HepG2 (cell line): ENCODE measurements at regions of chr5 and their contacts with region 1.

Region 1: DNA sequence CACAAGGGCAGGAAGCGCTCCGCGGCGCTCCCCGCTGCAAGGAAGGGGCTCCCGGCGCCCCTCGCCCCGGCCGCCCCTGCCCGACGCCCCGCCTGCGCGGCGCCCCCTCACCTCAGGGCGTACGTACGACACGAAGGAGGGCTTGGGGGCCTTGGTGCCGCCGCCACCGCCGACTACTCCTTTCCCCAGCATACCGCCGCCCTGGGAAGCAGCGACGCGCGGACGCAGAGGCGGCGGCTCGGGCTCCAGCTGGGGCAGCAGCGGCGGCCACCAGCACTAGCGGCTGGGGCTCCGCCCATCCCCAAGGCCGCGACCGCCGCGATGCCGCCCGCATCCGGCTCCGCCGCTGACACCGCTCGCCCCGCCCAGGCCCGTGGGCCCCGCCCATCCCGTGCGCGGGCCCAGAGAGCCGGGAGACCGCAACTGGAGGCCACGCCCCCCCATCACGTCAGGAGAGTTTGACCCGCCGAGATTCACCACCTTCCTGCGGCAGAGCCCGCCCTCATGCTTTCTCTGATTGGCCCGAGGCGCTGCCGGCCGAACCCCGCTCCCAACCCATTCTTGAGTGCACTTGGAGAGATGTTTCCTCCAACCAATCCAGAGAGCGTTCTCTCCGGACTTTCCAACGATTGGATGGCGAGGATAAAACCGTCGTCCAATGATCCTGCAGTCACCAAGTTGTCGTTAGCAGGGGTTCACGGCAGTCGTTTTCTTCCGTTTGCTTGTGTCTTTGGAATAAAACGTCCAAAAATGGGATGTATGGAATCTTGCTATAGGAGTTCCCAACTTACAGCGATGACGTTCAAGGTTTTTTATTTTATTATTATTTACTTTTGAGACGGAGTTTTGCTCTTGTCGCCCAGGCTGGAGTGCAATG is at the start of gene MTMR12:
- DNase-seq: peak; percentile 98
- ATAC-seq: peak; percentile 94
- H3K4me3 ChIP-seq: peak within 1 kb of the TSS; percentile 84 to 95 (median 92)
- H3K27ac ChIP-seq: peak within 1 kb of the TSS; percentile 95
- H3K4me1 ChIP-seq: peaks cover 73% of the 10 kb centered on the region
- H3K27me3 ChIP-seq: no peaks in the 10 kb centered on the region
- CTCF ChIP-seq: no peak
- EP300 ChIP-seq: peak in 1 of 2 experiments; percentile 9; a peak in 1 of 4 replicates
- POLR2A ChIP-seq: peak; percentile 77 to 78
- RAD21 ChIP-seq: peak; percentile 64
- total RNA-seq, gene MTMR12: 36.6 and 56.5 TPM in 2 replicates

Region 2: GRCh38 chr5:32174011-32174870 is 138.6 kb before region 1 on chr5 and contains the start of gene GOLPH3:
- CTCF ChIA-PET with region 1: no interaction called
- POLR2A ChIA-PET with region 1: no interaction called
- in situ Hi-C with region 1: no loop called
- intact Hi-C with region 1: loop called (anchors 5 kb)
- DNase-seq: peak; percentile 81
- ATAC-seq: peak; percentile 94
- H3K4me3 ChIP-seq: peak within 1 kb of the TSS; percentile 85 to 90 (median 87)
- H3K27ac ChIP-seq: peak within 1 kb of the TSS; percentile 99
- H3K4me1 ChIP-seq: peaks cover 39% of the 10 kb centered on the region
- H3K27me3 ChIP-seq: no peaks in the 10 kb centered on the region; a peak in 1 of 5 replicates
- CTCF ChIP-seq: no peak; the same call in none of the 2 replicates
- EP300 ChIP-seq: no peak; a peak in 1 of 4 replicates
- POLR2A ChIP-seq: peak; percentile 86 to 90
- RAD21 ChIP-seq: peak; percentile 36; the same call in 1 of the 2 replicates
- total RNA-seq, gene GOLPH3: 84.5 and 102 TPM in 2 replicates

Region 3: DNA sequence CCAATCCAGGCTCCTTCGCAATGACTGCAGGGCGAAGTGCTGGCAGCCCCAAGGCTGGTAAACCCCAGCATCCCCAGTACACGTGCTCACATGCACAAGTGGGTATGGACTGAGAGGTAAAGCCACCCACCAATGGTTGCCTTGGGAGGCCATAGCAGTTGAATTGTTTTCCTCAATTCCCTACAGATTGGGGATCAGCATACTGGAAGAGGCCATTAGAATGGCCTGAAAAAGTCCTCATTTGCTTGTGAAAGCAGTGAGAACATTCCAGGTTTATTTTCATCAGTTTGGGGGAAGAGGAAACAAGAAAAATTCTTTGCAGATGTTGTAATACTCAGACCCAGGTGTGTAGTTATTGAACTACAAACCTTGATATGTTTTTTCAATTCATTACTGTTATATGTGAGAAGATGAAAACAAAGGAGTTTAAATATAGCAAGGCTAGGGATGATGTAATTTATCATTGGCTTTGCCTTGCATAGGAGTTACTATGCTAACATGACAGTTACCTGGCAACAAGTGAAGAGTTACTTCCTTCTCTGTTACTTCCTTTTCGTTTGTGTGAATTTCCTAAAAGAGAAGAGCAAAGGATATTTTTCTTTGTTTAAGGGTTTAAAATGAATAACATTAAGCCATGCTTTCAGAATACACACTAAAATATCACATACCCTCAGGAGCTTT is 36.6 kb before region 1 on chr5:
- CTCF ChIA-PET with region 1: no interaction called
- POLR2A ChIA-PET with region 1: interaction called, 5 read pairs
- in situ Hi-C with region 1: no loop called
- intact Hi-C with region 1: loop called (anchors 5 kb)
- DNase-seq: peak; percentile 23
- ATAC-seq: no peak
- H3K4me3 ChIP-seq: no peak overlapping the region
- H3K27ac ChIP-seq: peak overlapping the region; percentile 67
- H3K4me1 ChIP-seq: peaks cover 93% of the 10 kb centered on the region
- H3K27me3 ChIP-seq: no peaks in the 10 kb centered on the region
- CTCF ChIP-seq: no peak
- EP300 ChIP-seq: no peak
- POLR2A ChIP-seq: no peak
- RAD21 ChIP-seq: no peak

Region 4: GRCh38 chr5:32329308-32329834 is 16.5 kb after region 1 on chr5:
- CTCF ChIA-PET with region 1: no interaction called
- POLR2A ChIA-PET with region 1: interaction called, 32 read pairs
- in situ Hi-C with region 1: no loop called
- intact Hi-C with region 1: loop called (anchors 2 kb)
- DNase-seq: peak; percentile 73
- ATAC-seq: peak; percentile 78
- H3K4me3 ChIP-seq: no peak overlapping the region
- H3K27ac ChIP-seq: peak overlapping the region; percentile 95
- H3K4me1 ChIP-seq: peaks cover 66% of the 10 kb centered on the region
- H3K27me3 ChIP-seq: no peaks in the 10 kb centered on the region
- CTCF ChIP-seq: peak; percentile 94
- EP300 ChIP-seq: no peak
- POLR2A ChIP-seq: no peak
- RAD21 ChIP-seq: peak; percentile 83

Region 5: GRCh38 chr5:32572778-32573480 is 260.0 kb after region 1 on chr5:
- CTCF ChIA-PET with region 1: no interaction called
- POLR2A ChIA-PET with region 1: no interaction called
- in situ Hi-C with region 1: no loop called
- intact Hi-C with region 1: loop called (anchors 5 kb)
- DNase-seq: no peak
- ATAC-seq: no peak
- H3K4me3 ChIP-seq: no peak overlapping the region
- H3K27ac ChIP-seq: peak overlapping the region; percentile 99
- H3K4me1 ChIP-seq: peaks cover 52% of the 10 kb centered on the region
- H3K27me3 ChIP-seq: no peaks in the 10 kb centered on the region
- CTCF ChIP-seq: no peak
- EP300 ChIP-seq: no peak
- POLR2A ChIP-seq: no peak
- RAD21 ChIP-seq: no peak